Endothelial cell of umbilical vein (primary cell): ENCODE measurements at regions of chr5 and their contacts with region 1.

Region 1: GRCh38 chr5:112174959-112175594 is 244.0 kb downstream of the EPB41L4A start:
- DNase-seq: peak; percentile 58
- H3K4me3 ChIP-seq: no peak overlapping the region
- H3K27ac ChIP-seq: no peak overlapping the region
- H3K4me1 ChIP-seq: no peaks in the 10 kb centered on the region
- H3K27me3 ChIP-seq: no peaks in the 10 kb centered on the region
- CTCF ChIP-seq: peak; percentile 55 to 57
- POLR2A ChIP-seq: no peak

Region 2: GRCh38 chr5:112485934-112486355 is 310.9 kb after region 1 on chr5:
- CTCF ChIA-PET with region 1: interaction called, 32 read pairs
- POLR2A ChIA-PET with region 1: no interaction called
- dilution Hi-C with region 1: no loop called
- intact Hi-C with region 1: loop called (anchors 2 kb)
- DNase-seq: peak; percentile 86
- H3K4me3 ChIP-seq: no peak overlapping the region
- H3K27ac ChIP-seq: peak overlapping the region; percentile 78
- H3K4me1 ChIP-seq: peaks cover 15% of the 10 kb centered on the region
- H3K27me3 ChIP-seq: no peaks in the 10 kb centered on the region
- CTCF ChIP-seq: no peak
- POLR2A ChIP-seq: no peak

Region 3: GRCh38 chr5:112492291-112492690 is 317.2 kb after region 1 on chr5:
- CTCF ChIA-PET with region 1: interaction called, 32 read pairs
- POLR2A ChIA-PET with region 1: no interaction called
- dilution Hi-C with region 1: no loop called
- intact Hi-C with region 1: loop called (anchors 1 kb)
- DNase-seq: peak; percentile 92
- H3K4me3 ChIP-seq: no peak overlapping the region
- H3K27ac ChIP-seq: no peak overlapping the region
- H3K4me1 ChIP-seq: no peaks in the 10 kb centered on the region
- H3K27me3 ChIP-seq: peaks cover 0 to 4% of the 10 kb centered on the region in 2 experiments
- CTCF ChIP-seq: peak; percentile 77 to 84
- POLR2A ChIP-seq: no peak

Region 4: DNA sequence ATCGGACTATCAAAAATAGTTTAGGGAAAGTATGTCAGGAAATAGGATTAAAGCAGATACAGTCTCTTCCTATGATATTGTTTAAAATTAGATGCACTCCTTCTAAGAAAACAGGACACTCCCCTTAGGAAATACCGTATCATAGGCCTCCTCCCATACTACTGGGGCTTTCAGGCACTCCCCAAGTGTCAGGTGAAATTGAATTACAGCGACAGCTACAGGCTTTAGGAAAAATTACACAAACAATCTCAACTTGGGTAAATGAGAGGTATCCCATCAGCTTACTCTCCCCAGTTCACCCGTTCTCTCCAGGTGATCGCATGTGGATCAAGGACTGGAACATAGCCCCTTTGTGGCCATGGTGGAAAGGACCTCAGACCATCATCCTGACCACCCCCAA is 354.4 kb after region 1 on chr5:
- CTCF ChIA-PET with region 1: interaction called, 20 read pairs
- POLR2A ChIA-PET with region 1: no interaction called
- dilution Hi-C with region 1: no loop called
- intact Hi-C with region 1: loop called (anchors 1 kb)
- DNase-seq: peak; percentile 46
- H3K4me3 ChIP-seq: no peak overlapping the region
- H3K27ac ChIP-seq: no peak overlapping the region
- H3K4me1 ChIP-seq: no peaks in the 10 kb centered on the region
- H3K27me3 ChIP-seq: peaks cover 0 to 1% of the 10 kb centered on the region in 2 experiments
- CTCF ChIP-seq: peak; percentile 35 to 42
- POLR2A ChIP-seq: no peak